A549 (cell line): ENCODE measurements at regions of chr1 and their contacts with region 1.

Region 1: DNA sequence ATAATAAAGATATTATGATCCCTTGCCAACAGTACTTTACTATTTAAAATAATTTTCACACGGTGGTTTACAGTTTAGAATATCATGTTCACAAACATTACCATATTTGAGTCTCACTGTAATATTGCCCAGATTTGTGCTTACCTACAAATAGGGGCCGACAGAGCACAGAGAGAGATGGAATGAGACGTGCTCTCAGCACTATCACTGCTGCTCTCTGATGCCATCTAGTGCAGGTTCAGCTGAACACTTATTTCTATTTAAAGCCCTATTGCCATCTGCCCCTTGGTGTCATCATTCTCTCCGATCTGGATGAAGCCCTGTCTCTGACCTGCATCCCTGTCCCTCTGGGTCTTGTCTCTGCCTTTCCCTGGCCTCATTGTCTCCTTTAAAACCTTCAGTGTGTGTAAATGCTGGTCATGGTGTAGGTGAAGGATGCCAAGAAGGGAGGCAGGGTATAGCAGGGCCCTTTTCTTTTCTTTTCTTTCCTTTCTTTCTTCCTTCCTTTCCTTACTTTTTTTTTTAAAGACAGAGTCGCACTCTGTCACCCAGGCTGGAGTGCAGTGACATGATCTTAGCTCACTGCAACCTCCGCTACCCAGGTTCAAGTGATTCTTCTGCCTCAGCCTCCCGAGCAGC is 6.9 kb upstream of the GPATCH4 start:
- DNase-seq: peak; percentile 67 to 84
- ATAC-seq: peak; percentile 98 to 99
- H3K4me3 ChIP-seq: no peak overlapping the region
- H3K27ac ChIP-seq: peak overlapping the region; percentile 41 to 70; a peak in 4 of 6 replicates
- H3K4me1 ChIP-seq: peaks cover 8% of the 10 kb centered on the region; the same call in 2 of the 3 replicates
- CTCF ChIP-seq: peak; percentile 83
- EP300 ChIP-seq: no peak
- POLR2A ChIP-seq: no peak
- RAD21 ChIP-seq: peak; percentile 71 to 76

Region 2: DNA sequence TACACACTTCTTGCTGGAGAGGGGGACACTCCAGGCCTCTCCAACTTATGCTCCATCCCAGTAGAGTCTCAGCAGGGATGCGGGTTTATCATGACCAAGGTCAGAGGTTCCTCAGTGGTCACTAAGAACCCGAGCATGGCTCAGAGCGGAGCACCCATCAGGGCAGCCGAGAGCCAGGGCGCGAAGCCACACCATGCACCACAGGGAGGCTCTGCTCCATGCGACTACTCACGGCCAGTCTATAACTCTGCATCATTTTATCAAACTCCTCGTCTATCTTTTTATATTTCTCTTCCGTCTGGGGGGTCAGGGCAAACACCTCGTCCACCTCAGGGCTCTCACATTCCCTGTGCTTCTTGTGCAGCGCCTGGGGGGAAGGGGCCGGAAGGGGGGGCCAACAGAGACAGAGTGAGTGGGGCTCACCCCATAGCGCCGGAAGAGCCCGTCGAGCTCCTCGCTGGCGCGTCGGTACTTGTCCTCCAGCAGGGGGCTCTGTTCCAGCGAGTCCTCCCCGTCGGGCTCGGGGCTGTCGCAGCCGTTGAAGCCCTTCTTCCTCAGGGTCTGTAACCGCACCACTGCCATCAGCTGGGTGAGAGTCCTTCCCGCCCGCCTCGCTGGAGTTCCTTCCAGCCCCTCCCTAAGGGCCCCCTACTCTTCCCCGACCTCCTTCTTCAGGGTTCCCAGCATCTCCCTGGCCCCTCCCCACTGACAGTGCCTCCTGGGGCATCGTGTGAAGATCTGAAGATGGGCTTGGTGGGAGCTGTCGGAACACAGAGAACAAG is 127.6 kb before region 1 on chr1:
- CTCF ChIA-PET with region 1: interaction called, 14 read pairs
- POLR2A ChIA-PET with region 1: no interaction called
- DNase-seq: peak; percentile 59 to 83
- ATAC-seq: peak; percentile 36 to 78; a peak in 3 of 6 replicates
- H3K4me3 ChIP-seq: no peak overlapping the region
- H3K27ac ChIP-seq: peak overlapping the region in 1 of 2 experiments; percentile 42; a peak in 2 of 6 replicates
- H3K4me1 ChIP-seq: peaks cover 29% of the 10 kb centered on the region
- CTCF ChIP-seq: peak; percentile 64
- EP300 ChIP-seq: no peak
- POLR2A ChIP-seq: no peak
- RAD21 ChIP-seq: peak; percentile 53 to 57

Region 3: GRCh38 chr1:156577550-156577949 is 30.6 kb before region 1 on chr1:
- CTCF ChIA-PET with region 1: interaction called, 41 read pairs
- POLR2A ChIA-PET with region 1: no interaction called
- DNase-seq: no peak
- ATAC-seq: no peak
- H3K4me3 ChIP-seq: no peak overlapping the region
- H3K27ac ChIP-seq: no peak overlapping the region
- H3K4me1 ChIP-seq: no peaks in the 10 kb centered on the region
- CTCF ChIP-seq: no peak
- EP300 ChIP-seq: no peak
- POLR2A ChIP-seq: no peak
- RAD21 ChIP-seq: no peak

Region 4: GRCh38 chr1:156591432-156592157 is 16.6 kb before region 1 on chr1 and contains the start of gene NAXE:
- CTCF ChIA-PET with region 1: interaction called, 135 read pairs
- POLR2A ChIA-PET with region 1: interaction called, 7 read pairs
- DNase-seq: peak; percentile 57 to 79
- ATAC-seq: peak; percentile 76 to 89
- H3K4me3 ChIP-seq: peak within 1 kb of the TSS; percentile 72
- H3K27ac ChIP-seq: peak within 1 kb of the TSS; percentile 94 to 98
- H3K4me1 ChIP-seq: peaks cover 10% of the 10 kb centered on the region; the same call in 2 of the 3 replicates
- CTCF ChIP-seq: no peak
- EP300 ChIP-seq: no peak
- POLR2A ChIP-seq: peak; percentile 91
- RAD21 ChIP-seq: no peak
- polyA plus RNA-seq, gene NAXE: 81.4 and 109 TPM in 2 replicates

Region 5: GRCh38 chr1:156625436-156626078 is 17.4 kb after region 1 on chr1:
- CTCF ChIA-PET with region 1: interaction called, 115 read pairs
- POLR2A ChIA-PET with region 1: no interaction called
- DNase-seq: peak in 1 of 2 experiments; percentile 61
- ATAC-seq: peak; percentile 27 to 64
- H3K4me3 ChIP-seq: peak overlapping the region; percentile 49
- H3K27ac ChIP-seq: peak overlapping the region; percentile 3 to 76; a peak in 3 of 6 replicates
- H3K4me1 ChIP-seq: peaks cover 12% of the 10 kb centered on the region
- CTCF ChIP-seq: peak; percentile 80
- EP300 ChIP-seq: no peak
- POLR2A ChIP-seq: no peak
- RAD21 ChIP-seq: peak; percentile 65 to 72

Region 6: GRCh38 chr1:156709743-156710489 is 101.8 kb after region 1 on chr1:
- CTCF ChIA-PET with region 1: no interaction called
- POLR2A ChIA-PET with region 1: no interaction called
- DNase-seq: peak in 1 of 2 experiments; percentile 29
- ATAC-seq: peak; percentile 37 to 45; a peak in 5 of 6 replicates
- H3K4me3 ChIP-seq: no peak overlapping the region
- H3K27ac ChIP-seq: peak overlapping the region in 1 of 2 experiments; percentile 51; a peak in 2 of 6 replicates
- H3K4me1 ChIP-seq: peaks cover 68% of the 10 kb centered on the region
- CTCF ChIP-seq: no peak
- EP300 ChIP-seq: no peak
- POLR2A ChIP-seq: no peak
- RAD21 ChIP-seq: no peak

Region 7: GRCh38 chr1:156760097-156760803 is 152.1 kb after region 1 on chr1:
- CTCF ChIA-PET with region 1: no interaction called
- POLR2A ChIA-PET with region 1: no interaction called
- DNase-seq: no peak
- ATAC-seq: peak in 1 of 2 experiments; percentile 56; a peak in 4 of 6 replicates
- H3K4me3 ChIP-seq: no peak overlapping the region
- H3K27ac ChIP-seq: no peak overlapping the region
- H3K4me1 ChIP-seq: no peaks in the 10 kb centered on the region
- CTCF ChIP-seq: no peak
- EP300 ChIP-seq: no peak
- POLR2A ChIP-seq: no peak
- RAD21 ChIP-seq: no peak